ENCODE measurements at regions of chr12 and their contacts with region 1.

Region 1: DNA sequence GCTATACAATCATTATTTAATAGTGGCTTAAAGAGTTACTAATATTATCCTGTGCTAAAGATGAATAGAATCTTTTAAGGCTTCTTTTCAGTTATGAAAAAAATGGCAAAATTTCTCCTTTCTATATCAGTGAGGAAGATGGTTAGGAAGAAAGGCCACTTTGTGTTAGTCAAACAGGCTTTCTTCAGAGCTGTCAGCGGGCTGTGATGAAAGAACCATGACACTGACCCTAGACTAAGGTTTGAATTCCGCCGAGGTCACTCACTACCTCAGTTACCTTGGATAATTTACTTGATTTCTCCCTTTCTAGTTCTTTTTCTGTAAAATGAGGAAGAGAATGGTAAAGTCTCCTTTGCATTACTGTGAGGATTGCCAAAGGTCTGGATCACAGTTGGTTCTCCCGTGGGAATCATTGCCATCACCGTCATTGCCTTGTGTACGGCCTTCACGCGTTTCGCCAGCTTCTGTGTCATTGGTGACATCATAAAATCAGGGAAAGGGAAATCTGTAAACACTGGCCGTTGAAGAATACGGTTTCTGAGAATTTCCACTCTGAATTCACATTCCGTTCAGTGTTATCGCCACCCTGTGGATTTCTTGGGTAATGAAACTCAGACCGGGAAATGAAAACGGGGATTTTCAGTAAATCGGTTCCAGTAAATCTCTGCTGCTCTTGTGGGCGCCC is 26.7 kb upstream of the YBX3 start:
- H3K4me3 ChIP-seq: no peak overlapping the region; the same call in 1 of the 2 replicates
- H3K27ac ChIP-seq: no peak overlapping the region
- H3K4me1 ChIP-seq: no peaks in the 10 kb centered on the region
- CTCF ChIP-seq: peak; percentile 89

Region 2: DNA sequence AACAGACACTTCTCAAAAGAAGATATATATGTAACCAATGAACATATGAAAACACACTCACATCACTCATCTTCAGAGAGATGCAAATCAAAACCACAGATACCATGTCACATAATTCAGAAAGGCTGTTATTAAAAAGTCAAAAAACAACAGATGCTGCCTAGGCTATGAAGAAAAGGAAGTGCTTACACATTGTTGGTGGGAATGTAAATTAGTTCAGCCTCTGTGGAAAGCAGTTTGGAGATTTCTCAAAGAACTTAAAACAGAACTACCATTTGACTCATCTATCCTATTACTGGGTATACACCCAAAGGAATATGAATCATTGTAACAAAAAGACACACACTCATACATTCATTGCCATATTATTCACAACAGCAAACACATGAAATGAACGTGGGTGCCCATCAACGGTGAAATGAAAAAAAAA is 209.1 kb before region 1 on chr12:
- CTCF ChIA-PET with region 1: no interaction called
- POLR2A ChIA-PET with region 1: no interaction called
- H3K4me3 ChIP-seq: no peak overlapping the region
- H3K27ac ChIP-seq: no peak overlapping the region
- H3K4me1 ChIP-seq: no peaks in the 10 kb centered on the region
- CTCF ChIP-seq: no peak

Region 3: GRCh38 chr12:10612110-10612509 is 137.7 kb before region 1 on chr12:
- CTCF ChIA-PET with region 1: interaction called, 10 read pairs
- POLR2A ChIA-PET with region 1: no interaction called
- H3K4me3 ChIP-seq: peak overlapping the region; percentile 82; the same call in 1 of the 2 replicates
- H3K27ac ChIP-seq: no peak overlapping the region
- H3K4me1 ChIP-seq: 0 out of 2 replicates have a peak, but pooled peaks cover 3% of the 10 kb centered on the region
- CTCF ChIP-seq: no peak

Region 4: GRCh38 chr12:10697156-10697555 is 52.7 kb before region 1 on chr12:
- CTCF ChIA-PET with region 1: interaction called, 11 read pairs
- POLR2A ChIA-PET with region 1: no interaction called
- H3K4me3 ChIP-seq: no peak overlapping the region
- H3K27ac ChIP-seq: no peak overlapping the region
- H3K4me1 ChIP-seq: no peaks in the 10 kb centered on the region
- CTCF ChIP-seq: no peak

Region 5: GRCh38 chr12:10705655-10706054 is 44.2 kb before region 1 on chr12:
- CTCF ChIA-PET with region 1: interaction called, 20 read pairs
- POLR2A ChIA-PET with region 1: no interaction called
- H3K4me3 ChIP-seq: no peak overlapping the region
- H3K27ac ChIP-seq: no peak overlapping the region
- H3K4me1 ChIP-seq: no peaks in the 10 kb centered on the region
- CTCF ChIP-seq: no peak

Region 6: DNA sequence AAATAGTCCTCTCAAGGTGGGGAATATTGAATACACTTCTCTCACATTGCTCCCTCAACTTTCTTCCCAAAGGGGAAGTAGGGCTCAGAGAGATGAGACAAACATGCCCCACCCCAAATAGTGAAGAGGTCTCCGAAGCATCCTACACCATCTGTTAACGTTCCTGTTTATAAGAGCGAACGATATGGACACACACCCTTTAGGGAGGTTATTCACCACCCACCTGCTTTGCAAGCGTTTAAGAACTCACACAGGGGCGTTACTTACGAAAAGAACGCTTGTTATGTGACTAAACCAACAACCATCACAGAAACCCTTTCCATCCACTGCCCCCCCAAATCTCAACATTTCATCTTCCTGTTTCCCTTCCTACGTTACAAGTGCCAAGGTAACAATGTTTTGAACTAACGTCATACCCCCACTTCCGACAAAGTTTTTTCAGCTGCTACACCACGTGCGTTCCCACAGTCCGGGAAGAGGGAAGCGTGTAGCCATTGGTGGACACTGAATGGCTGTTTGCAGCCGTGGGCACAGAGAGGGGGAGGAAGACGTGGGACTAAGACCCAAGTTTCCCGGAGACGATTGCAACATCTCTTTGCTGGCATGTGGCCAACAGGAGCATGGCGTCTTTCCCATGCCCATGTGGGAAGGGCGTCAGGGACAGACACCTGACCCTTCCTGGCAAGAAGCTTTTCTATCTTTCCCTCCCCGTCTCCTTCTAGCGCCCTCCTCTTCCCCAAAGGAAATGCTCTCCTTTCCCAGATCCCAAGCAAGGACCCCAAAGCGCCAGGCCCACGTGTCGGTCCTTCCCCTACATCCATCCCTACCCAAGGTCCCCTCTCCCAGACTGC is 28.0 kb before region 1 on chr12:
- CTCF ChIA-PET with region 1: interaction called, 21 read pairs
- POLR2A ChIA-PET with region 1: interaction called, 3 read pairs
- H3K4me3 ChIP-seq: peak overlapping the region; percentile 99
- H3K27ac ChIP-seq: peak overlapping the region; percentile 96
- H3K4me1 ChIP-seq: peaks cover 35% of the 10 kb centered on the region
- CTCF ChIP-seq: peak; percentile 74

Region 7: DNA sequence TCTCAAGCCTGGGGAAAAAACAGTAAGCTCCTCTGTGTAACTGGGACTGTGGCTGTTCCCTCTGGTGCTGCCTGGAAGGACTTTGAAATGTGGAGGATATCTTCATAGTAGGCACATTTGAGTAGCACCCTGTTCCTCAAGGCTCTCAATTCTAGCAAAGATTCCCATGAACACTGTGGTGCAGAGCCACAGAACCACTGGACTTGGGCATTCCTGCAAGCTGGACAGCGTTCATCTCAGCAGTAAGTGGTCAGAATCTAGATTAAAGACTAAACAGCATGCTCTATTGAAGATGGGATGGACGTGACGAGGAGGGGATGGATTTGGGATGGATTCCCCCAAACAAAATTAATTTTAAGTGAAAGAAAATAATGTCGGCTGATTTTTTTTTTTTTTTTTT is 17.3 kb before region 1 on chr12:
- CTCF ChIA-PET with region 1: interaction called, 10 read pairs
- POLR2A ChIA-PET with region 1: no interaction called
- H3K4me3 ChIP-seq: no peak overlapping the region
- H3K27ac ChIP-seq: no peak overlapping the region
- H3K4me1 ChIP-seq: no peaks in the 10 kb centered on the region
- CTCF ChIP-seq: no peak

Region 8: GRCh38 chr12:10771132-10771733 is 21.4 kb after region 1 on chr12:
- CTCF ChIA-PET with region 1: interaction called, 16 read pairs
- POLR2A ChIA-PET with region 1: no interaction called
- H3K4me3 ChIP-seq: no peak overlapping the region
- H3K27ac ChIP-seq: no peak overlapping the region
- H3K4me1 ChIP-seq: no peaks in the 10 kb centered on the region
- CTCF ChIP-seq: 0 out of 2 replicates have a peak, but pooled peaks have one; percentile 36

Region 9: DNA sequence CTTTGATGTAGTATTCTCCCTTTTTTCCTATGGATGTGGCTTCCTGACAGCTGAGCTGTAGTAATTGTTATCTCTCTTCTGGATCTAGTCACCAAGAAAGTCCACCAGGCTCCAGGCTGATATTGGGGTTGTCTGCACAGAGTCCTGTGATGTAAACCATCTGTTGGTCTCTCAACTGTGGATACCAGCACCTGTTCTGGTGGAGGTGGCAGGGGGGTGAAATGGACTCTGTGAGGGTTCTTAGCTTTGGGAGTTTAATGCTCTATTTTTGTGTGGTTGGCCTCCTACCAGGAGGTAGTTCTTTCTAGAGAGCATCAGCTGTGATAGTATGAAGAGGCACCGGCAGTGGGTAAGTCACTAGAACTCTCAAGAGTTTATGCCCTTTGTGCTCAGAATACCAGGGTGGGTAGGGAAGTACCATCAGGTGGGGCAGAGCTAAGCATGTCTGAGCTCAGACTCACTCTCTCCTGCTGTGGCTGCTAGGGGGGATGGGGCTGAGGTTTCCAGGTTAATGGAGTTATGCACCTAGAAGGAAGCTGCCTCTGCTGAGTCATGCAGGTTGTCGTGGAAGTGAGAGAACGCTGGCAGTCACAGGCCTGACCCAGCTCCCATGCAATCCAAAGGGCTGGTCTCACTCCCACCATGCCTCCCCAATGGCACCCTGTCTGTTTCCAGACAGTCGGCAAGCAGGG is 192.2 kb after region 1 on chr12:
- CTCF ChIA-PET with region 1: no interaction called
- POLR2A ChIA-PET with region 1: no interaction called
- H3K4me3 ChIP-seq: no peak overlapping the region
- H3K27ac ChIP-seq: no peak overlapping the region
- H3K4me1 ChIP-seq: no peaks in the 10 kb centered on the region
- CTCF ChIP-seq: no peak

Measured in HEK293 (cell line).